Vagina (tissue), 2 donors: ENCODE measurements at regions of chr15 and their contacts with region 1.

Region 1: DNA sequence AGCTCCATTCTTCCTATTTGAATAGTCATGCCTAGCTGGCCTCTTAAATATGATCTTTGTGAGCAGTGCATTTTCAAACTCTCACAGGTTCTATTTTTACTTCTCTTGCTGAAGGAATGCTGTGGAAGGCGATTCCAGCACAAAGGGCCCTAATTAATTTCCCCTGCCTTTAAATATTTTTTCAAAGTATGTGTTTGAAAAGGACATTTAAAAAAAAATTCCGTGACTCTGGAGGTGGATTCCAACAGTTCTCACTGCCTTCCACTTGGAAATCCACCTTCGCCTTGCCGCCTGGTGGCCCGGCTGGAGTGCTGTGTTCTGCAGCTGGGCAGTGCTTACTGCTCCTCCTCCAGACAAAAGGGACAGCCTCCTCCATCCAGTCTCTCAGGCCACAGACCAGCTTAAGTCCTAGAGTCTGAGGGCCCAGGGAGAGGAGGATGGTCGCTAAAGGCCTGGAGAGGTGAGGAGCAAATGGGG is 61.5 kb upstream of the CORO2B start:
- DNase-seq: peak in 1 of 2 donors; percentile 77
- H3K4me3 ChIP-seq: no peak overlapping the region
- H3K27ac ChIP-seq: peak overlapping the region; percentile 60
- H3K4me1 ChIP-seq: peaks cover 18% of the 10 kb centered on the region
- H3K27me3 ChIP-seq: no peaks in the 10 kb centered on the region
- CTCF ChIP-seq: no peak
- POLR2A ChIP-seq: no peak

Region 2: GRCh38 chr15:68137096-68137495 is 380.2 kb before region 1 on chr15:
- intact Hi-C with region 1: no loop called
- DNase-seq: no peak
- H3K4me3 ChIP-seq: no peak overlapping the region
- H3K27ac ChIP-seq: no peak overlapping the region
- H3K4me1 ChIP-seq: peaks cover 32% of the 10 kb centered on the region
- H3K27me3 ChIP-seq: no peaks in the 10 kb centered on the region
- CTCF ChIP-seq: no peak
- POLR2A ChIP-seq: no peak

Region 3: GRCh38 chr15:68431792-68432401 is 85.4 kb before region 1 on chr15 and contains the start of gene ITGA11:
- intact Hi-C with region 1: loop called (anchors 10 kb)
- DNase-seq: peak; percentile 84 to 85
- H3K4me3 ChIP-seq: peak within 1 kb of the TSS; percentile 53 to 61
- H3K27ac ChIP-seq: peak within 1 kb of the TSS; percentile 79
- H3K4me1 ChIP-seq: peaks cover 21% of the 10 kb centered on the region
- H3K27me3 ChIP-seq: no peaks in the 10 kb centered on the region
- CTCF ChIP-seq: no peak
- POLR2A ChIP-seq: peak in 1 of 2 donors; percentile 35
- total RNA-seq, gene ITGA11: 15.5 TPM